ENCODE measurements at regions of chr17 and their contacts with region 1.

Region 1: DNA sequence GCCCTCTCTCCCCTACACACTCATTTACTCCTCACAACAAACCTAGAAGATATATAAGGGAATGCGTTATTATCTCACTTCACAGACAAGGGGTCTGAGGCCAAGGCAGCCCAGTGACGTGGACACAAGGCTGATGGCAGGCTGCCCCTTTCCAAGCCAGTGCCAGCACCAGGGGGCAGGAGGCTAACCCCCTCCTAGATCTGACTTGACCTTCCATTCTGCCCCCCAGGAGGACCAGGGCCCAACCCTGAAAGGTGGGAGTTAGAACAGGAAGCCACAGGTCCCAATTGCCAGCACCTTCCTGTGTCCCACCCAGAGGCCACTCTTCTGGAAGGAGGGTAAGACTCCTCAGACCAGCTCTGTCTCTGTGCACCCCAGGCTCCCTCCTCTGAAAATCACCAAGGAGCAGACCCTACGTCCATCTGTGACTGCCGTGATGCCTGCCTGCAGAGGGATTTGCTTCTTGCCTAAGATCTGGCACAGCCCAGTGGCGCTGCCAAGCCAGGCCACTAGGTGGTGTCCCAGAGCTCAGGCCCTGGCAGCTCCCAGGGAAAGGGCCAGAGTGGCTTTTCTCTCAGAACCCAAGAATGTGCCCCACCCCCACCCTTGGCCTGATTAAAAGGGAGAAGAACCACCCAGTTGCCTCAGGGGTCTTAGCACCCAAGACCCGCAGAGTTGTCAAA is 42.4 kb upstream of the MRPS23 start:
- DNase-seq: no peak
- H3K4me3 ChIP-seq: no peak overlapping the region
- H3K27me3 ChIP-seq: no peaks in the 10 kb centered on the region
- CTCF ChIP-seq: peak; percentile 99

Region 2: GRCh38 chr17:57574040-57574545 is 318.2 kb before region 1 on chr17:
- CTCF ChIA-PET with region 1: no interaction called
- POLR2A ChIA-PET with region 1: no interaction called
- DNase-seq: no peak
- H3K4me3 ChIP-seq: no peak overlapping the region
- H3K27me3 ChIP-seq: no peaks in the 10 kb centered on the region
- CTCF ChIP-seq: no peak

Region 3: GRCh38 chr17:57868007-57868909 is 24.0 kb before region 1 on chr17:
- CTCF ChIA-PET with region 1: interaction called, 34 read pairs
- POLR2A ChIA-PET with region 1: no interaction called
- DNase-seq: peak; percentile 73
- H3K4me3 ChIP-seq: no peak overlapping the region
- H3K27me3 ChIP-seq: no peaks in the 10 kb centered on the region
- CTCF ChIP-seq: peak; percentile 72

Region 4: GRCh38 chr17:57881783-57882351 is 10.4 kb before region 1 on chr17:
- CTCF ChIA-PET with region 1: interaction called, 95 read pairs
- POLR2A ChIA-PET with region 1: interaction called, 10 read pairs
- DNase-seq: no peak
- H3K4me3 ChIP-seq: no peak overlapping the region
- H3K27me3 ChIP-seq: no peaks in the 10 kb centered on the region
- CTCF ChIP-seq: no peak

Region 5: GRCh38 chr17:57935833-57936807 is 43.8 kb after region 1 on chr17:
- CTCF ChIA-PET with region 1: interaction called, 13 read pairs
- POLR2A ChIA-PET with region 1: no interaction called
- DNase-seq: no peak
- H3K4me3 ChIP-seq: no peak overlapping the region
- H3K27me3 ChIP-seq: no peaks in the 10 kb centered on the region
- CTCF ChIP-seq: no peak

Region 6: GRCh38 chr17:57955183-57955931 is 63.1 kb after region 1 on chr17 and contains the start of gene CUEDC1:
- CTCF ChIA-PET with region 1: interaction called, 39 read pairs
- POLR2A ChIA-PET with region 1: interaction called, 7 read pairs
- DNase-seq: no peak
- H3K4me3 ChIP-seq: peak within 1 kb of the TSS; percentile 69
- H3K27me3 ChIP-seq: no peaks in the 10 kb centered on the region
- CTCF ChIP-seq: 0 out of 2 replicates have a peak, but pooled peaks have one; percentile 26
- polyA plus RNA-seq, gene CUEDC1: 27.3 and 48.5 TPM in 2 replicates

Region 7: DNA sequence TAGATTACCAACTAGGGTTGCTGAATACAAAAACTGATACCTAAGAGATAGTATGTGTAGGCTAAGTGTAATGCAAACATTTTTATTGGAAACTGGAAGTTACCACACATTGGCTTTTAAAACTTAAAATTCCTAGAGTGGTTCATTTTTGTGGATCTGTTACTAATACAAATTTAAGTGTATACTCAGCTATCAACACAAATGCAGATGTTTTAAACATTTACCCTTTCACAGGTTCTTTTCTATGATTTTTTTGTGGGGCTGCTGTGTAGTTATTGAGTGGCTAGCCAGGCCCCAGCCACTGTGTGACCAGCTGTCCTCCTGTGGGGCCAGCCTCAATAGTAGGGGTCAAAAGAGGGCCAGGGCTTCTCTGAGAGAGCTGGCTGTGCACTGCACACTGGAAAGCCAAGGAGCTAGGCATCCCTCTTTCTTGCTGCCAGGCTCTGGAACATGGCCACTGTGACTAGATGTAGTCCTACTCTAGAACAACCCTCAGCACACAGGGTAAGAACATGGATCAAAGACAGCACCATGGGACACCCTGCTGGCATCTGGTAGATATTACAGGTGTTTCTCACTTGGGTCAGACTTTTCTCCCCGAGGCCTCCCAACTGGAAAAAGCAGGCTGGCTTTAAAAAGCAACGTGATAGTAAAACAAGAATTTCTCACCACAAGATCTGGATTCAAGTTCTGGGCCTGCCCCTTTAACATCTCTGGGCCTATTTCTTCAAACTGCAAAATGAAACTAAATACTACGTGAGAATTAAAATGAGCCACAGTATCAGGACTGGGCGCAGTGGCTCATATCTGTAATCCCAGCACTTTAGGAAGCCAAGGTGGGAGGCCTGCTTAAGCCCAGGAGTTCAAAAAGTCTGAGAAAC is 103.0 kb after region 1 on chr17:
- CTCF ChIA-PET with region 1: interaction called, 17 read pairs
- POLR2A ChIA-PET with region 1: interaction called, 4 read pairs
- DNase-seq: no peak
- H3K4me3 ChIP-seq: no peak overlapping the region
- H3K27me3 ChIP-seq: no peaks in the 10 kb centered on the region
- CTCF ChIP-seq: peak; percentile 68

Measured in BJ (cell line).